Sigmoid colon (tissue), 7 donors: ENCODE measurements at regions of chr5 and their contacts with region 1.

Region 1: DNA sequence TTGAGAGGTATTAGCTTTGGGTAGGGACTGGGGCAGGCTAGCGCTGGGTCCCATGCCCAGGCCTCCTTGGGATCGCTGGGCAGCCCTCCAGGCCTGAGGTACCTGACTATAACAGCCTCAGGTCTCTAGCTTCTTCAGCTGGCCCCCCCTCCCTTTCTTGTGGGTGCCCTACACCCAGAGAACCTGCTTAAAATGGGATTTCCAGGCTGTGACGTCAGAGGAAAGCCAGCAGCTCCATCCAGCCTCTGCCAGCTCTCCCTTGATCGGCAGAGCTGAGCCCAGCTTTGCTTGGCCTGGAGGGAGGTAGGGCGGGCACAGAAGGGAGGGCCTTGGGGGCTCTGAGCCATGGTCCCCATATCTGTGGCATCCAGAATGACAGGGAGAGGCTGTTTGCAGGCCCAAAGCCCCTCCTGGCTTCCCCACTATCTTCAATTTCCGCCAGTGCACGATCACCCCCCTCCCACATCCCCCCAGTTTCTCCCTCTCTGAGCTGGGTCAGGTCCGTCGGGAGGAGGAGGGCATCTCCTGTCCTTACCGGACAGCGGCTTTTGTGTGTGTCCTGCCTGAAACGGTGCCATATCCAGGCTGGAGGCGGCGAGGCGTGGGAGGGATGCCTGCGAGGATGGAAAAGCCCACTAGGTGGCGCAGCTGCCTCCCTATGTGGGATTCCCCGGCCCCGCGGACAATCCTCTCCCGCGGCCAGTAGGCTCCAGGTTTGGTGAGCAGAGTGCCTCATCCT is 10.8 kb downstream of the REEP2 start:
- DNase-seq: peak; percentile 95
- H3K4me3 ChIP-seq: peak overlapping the region in 1 of 4 donors; percentile 18
- H3K27ac ChIP-seq: peak overlapping the region in 2 of 4 donors; percentile 33 to 51
- H3K4me1 ChIP-seq: peaks cover 0 to 13% (median 11%) of the 10 kb centered on the region in 4 donors
- H3K27me3 ChIP-seq: no peaks in the 10 kb centered on the region
- CTCF ChIP-seq: peak; percentile 96 to 98 (median 97)
- EP300 ChIP-seq: no peak
- POLR2A ChIP-seq: no peak

Region 2: GRCh38 chr5:138503487-138504270 is 54.0 kb after region 1 on chr5:
- intact Hi-C with region 1: loop called (anchors 1 kb)
- DNase-seq: no peak
- H3K4me3 ChIP-seq: no peak overlapping the region
- H3K27ac ChIP-seq: peak overlapping the region; percentile 47 to 70 (median 61)
- H3K4me1 ChIP-seq: peaks cover 0 to 26% (median 19%) of the 10 kb centered on the region in 4 donors
- H3K27me3 ChIP-seq: no peaks in the 10 kb centered on the region
- CTCF ChIP-seq: peak; percentile 75 to 87 (median 82)
- EP300 ChIP-seq: no peak
- POLR2A ChIP-seq: no peak